GM13976 (cell line): ENCODE measurements at regions of chr7 and their contacts with region 1.

Region 1: DNA sequence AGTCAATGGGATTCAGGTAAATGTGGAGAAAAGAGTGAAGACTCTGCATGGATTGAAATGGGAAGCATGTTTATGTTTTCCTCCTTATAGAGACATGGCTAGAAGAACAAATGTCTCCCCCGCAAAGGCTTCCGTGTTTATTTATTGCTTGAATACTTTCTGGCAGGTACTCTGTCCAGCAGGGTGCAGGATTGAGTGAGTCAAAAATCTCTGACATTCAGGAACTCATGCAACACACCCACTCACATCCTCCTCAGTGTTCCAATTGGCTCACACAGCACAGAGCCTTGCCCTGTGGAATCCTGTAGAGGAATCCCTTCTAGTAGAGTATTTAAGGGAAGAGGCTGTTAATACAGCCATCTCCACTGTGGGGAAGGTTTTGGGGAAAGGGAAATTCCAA is 290.3 kb upstream of the VWC2 start:
- DNase-seq: peak; percentile 2
- CTCF ChIP-seq: no peak

Region 2: GRCh38 chr7:49791088-49791741 is 308.1 kb after region 1 on chr7:
- in situ Hi-C with region 1: loop called (anchors 25 kb)
- DNase-seq: peak; percentile 69
- CTCF ChIP-seq: peak; percentile 59